K562 (cell line): ENCODE measurements at regions of chr1 and their contacts with region 1.

Region 1: DNA sequence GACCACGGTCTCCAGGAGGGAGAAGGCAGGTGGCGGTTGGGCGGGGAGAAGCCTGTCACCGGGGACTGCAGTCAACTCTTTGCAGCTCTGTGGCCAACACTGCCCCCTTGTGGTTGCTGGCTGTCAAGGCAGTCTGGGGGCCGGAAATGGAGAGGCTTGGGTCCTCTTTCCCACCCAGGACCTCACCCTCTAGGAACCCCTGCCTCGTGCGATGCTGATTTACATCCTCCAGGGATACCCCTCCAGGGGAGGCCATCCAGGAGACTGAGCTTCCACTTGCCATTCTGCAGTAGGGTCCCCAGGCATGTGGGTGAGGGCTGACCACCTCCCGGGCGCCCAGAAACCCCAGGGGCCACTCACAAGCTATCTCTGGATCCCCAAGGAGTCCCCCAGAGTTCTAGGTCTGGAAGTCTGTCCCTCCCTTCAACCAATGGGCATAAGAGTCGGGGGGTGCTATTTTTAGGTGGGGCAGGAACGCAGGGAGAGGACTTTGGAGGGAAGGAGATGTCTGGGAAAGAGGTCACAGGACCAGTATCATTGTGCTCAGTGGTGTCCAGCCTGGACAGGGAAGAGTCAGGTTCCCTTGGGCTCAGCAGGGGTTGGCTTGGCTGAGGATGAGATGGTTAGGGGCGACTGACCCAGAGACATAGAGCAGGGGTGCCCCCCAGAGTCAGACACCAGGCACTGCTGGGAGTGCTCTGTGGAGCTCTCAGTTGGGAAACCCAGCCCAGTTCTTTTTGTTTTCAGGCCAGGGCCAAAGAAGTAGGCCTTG is 7.1 kb upstream of the GPR61 start:
- DNase-seq: peak; percentile 88 to 91 (median 90)
- ATAC-seq: peak; percentile 92
- H3K4me3 ChIP-seq: no peak overlapping the region
- H3K27ac ChIP-seq: peak overlapping the region; percentile 63; the same call in 2 of the 3 replicates
- H3K4me1 ChIP-seq: peaks cover 9 to 14% of the 10 kb centered on the region in 2 experiments; a peak in 4 of 5 replicates
- H3K27me3 ChIP-seq: peaks cover 5 to 14% of the 10 kb centered on the region in 2 experiments
- CTCF ChIP-seq: peak; percentile 97 to 99 (median 97)
- EP300 ChIP-seq: no peak
- POLR2A ChIP-seq: no peak
- RAD21 ChIP-seq: peak; percentile 92 to 98

Region 2: DNA sequence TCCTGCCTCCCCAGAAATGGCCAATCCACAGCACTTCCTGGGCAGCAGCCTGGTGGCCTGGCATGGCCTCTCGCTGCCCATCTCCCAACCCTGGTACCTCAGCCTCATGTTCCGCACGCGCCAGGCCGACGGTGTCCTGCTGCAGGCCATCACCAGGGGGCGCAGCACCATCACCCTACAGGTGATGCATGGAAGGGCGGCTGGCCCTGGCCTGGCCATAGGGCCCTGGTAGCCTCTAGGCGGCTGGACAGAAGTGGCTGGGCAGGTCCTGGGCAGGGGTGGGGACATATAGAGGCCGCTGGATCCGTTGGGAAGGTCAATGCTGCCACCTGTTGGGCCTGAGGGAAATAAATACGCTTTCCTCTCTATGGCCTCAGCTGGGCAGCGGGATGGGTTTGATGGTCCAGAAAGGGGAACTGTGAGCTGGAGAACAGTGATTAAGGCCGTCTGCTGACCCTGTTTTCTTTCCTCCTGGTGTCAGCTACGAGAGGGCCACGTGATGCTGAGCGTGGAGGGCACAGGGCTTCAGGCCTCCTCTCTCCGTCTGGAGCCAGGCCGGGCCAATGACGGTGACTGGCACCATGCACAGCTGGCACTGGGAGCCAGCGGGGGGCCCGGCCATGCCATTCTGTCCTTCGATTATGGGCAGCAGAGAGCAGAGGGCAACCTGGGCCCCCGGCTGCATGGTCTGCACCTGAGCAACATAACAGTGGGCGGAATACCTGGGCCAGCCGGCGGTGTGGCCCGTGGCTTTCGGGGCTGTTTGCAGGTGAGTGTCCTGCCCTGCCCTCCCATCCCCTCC is 268.8 kb before region 1 on chr1:
- CTCF ChIA-PET with region 1: interaction called, 32 read pairs
- POLR2A ChIA-PET with region 1: no interaction called
- in situ Hi-C with region 1: loop called (anchors 5 kb)
- intact Hi-C with region 1: loop called (anchors 1 kb)
- DNase-seq: peak; percentile 91 to 96 (median 93)
- ATAC-seq: peak; percentile 99
- H3K4me3 ChIP-seq: no peak overlapping the region
- H3K27ac ChIP-seq: no peak overlapping the region
- H3K4me1 ChIP-seq: peaks cover 0 to 31% of the 10 kb centered on the region in 2 experiments; a peak in 2 of 5 replicates
- H3K27me3 ChIP-seq: no peaks in the 10 kb centered on the region
- CTCF ChIP-seq: peak; percentile 99 to 100 (median 100)
- EP300 ChIP-seq: peak; percentile 16; the same call in 1 of the 2 replicates
- POLR2A ChIP-seq: no peak
- RAD21 ChIP-seq: peak; percentile 98 to 100

Region 3: GRCh38 chr1:109397538-109398342 is 134.8 kb before region 1 on chr1 and contains the start of gene SORT1:
- CTCF ChIA-PET with region 1: interaction called, 3 read pairs
- POLR2A ChIA-PET with region 1: no interaction called
- in situ Hi-C with region 1: no loop called
- intact Hi-C with region 1: loop called (anchors 1 kb)
- DNase-seq: peak; percentile 93 to 96 (median 94)
- ATAC-seq: peak; percentile 88
- H3K4me3 ChIP-seq: peak within 1 kb of the TSS; percentile 55
- H3K27ac ChIP-seq: peak within 1 kb of the TSS; percentile 51
- H3K4me1 ChIP-seq: peaks cover 29 to 34% of the 10 kb centered on the region in 2 experiments
- H3K27me3 ChIP-seq: no peaks in the 10 kb centered on the region
- CTCF ChIP-seq: peak in 2 of 3 experiments; percentile 37 to 60; a peak in 4 of 6 replicates
- EP300 ChIP-seq: no peak
- POLR2A ChIP-seq: no peak
- RAD21 ChIP-seq: peak; percentile 56 to 81
- polyA plus RNA-seq, gene SORT1: 27.4 to 33.3 TPM

Region 4: GRCh38 chr1:109483672-109484518 is 48.7 kb before region 1 on chr1 and contains the start of gene ATXN7L2:
- CTCF ChIA-PET with region 1: interaction called, 4 read pairs
- POLR2A ChIA-PET with region 1: interaction called, 21 read pairs
- in situ Hi-C with region 1: no loop called
- intact Hi-C with region 1: no loop called
- DNase-seq: peak; percentile 97 to 100 (median 99)
- ATAC-seq: peak; percentile 85
- H3K4me3 ChIP-seq: peak within 1 kb of the TSS; percentile 76
- H3K27ac ChIP-seq: peak within 1 kb of the TSS; percentile 93
- H3K4me1 ChIP-seq: peaks cover 12 to 23% of the 10 kb centered on the region in 2 experiments; a peak in 4 of 5 replicates
- H3K27me3 ChIP-seq: peaks cover 18 to 28% of the 10 kb centered on the region in 2 experiments; a peak in 4 of 5 replicates
- CTCF ChIP-seq: no peak
- EP300 ChIP-seq: no peak; the same call in 1 of the 2 replicates
- POLR2A ChIP-seq: peak; percentile 90
- RAD21 ChIP-seq: peak; percentile 17 to 19; a peak in 1 of 4 replicates
- polyA plus RNA-seq, gene ATXN7L2: 0.21 to 0.56 TPM

Region 5: GRCh38 chr1:109499661-109500536 is 32.7 kb before region 1 on chr1:
- CTCF ChIA-PET with region 1: interaction called, 131 read pairs
- POLR2A ChIA-PET with region 1: interaction called, 17 read pairs
- in situ Hi-C with region 1: loop called (anchors 5 kb)
- intact Hi-C with region 1: loop called (anchors 1 kb)
- DNase-seq: peak; percentile 54 to 81 (median 66)
- ATAC-seq: peak; percentile 79
- H3K4me3 ChIP-seq: no peak overlapping the region
- H3K27ac ChIP-seq: no peak overlapping the region
- H3K4me1 ChIP-seq: peaks cover 16 to 35% of the 10 kb centered on the region in 2 experiments
- H3K27me3 ChIP-seq: no peaks in the 10 kb centered on the region
- CTCF ChIP-seq: peak; percentile 72 to 86 (median 75)
- EP300 ChIP-seq: no peak
- POLR2A ChIP-seq: no peak
- RAD21 ChIP-seq: peak; percentile 48 to 59

Region 6: DNA sequence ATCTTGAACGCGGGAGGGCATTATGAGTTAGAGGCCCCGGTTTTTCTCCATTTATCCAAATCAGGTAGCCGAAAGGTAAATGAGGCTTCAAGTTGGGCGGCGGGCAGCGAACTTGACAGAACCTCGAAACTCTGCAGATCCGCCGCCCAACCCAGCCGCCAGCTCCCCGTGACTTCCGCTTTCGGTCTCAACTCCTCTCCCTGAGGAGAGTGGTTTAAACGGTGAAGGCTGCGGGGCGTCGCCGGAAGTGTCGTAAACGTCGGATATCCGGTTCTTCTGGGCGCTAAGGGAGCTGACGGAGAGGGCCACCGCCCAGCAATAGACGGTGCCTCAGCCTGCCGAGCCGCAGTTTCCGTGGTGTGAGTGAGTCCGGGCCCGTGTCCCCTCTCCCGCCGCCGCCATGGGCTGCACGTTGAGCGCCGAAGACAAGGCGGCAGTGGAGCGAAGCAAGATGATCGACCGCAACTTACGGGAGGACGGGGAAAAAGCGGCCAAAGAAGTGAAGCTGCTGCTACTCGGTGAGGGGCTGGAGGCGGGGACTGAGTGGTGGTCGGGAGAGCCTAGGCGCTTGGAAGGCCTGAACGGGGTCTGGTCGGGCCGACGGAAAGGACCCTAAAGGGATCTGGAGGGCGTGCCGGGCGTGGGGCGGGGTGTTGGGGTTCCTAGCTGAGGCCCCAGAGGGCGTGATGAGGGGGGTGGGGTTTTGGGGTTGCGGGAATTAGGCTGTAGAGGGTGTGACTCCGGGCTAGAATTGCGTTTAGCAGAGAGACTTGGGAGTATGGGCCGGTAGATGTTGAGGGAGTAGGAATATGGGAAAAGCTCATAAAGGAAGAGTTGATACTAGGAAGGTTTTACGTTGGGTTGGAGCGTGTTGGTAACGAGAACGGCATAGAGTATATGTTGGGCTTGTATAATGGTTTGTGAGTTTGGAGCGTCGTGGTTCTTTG is 16.0 kb after region 1 on chr1 and contains the start of gene GNAI3:
- CTCF ChIA-PET with region 1: interaction called, 4 read pairs
- POLR2A ChIA-PET with region 1: interaction called, 13 read pairs
- in situ Hi-C with region 1: no loop called
- intact Hi-C with region 1: no loop called
- DNase-seq: peak; percentile 92 to 99 (median 94)
- ATAC-seq: peak; percentile 96
- H3K4me3 ChIP-seq: peak within 1 kb of the TSS; percentile 94
- H3K27ac ChIP-seq: peak within 1 kb of the TSS; percentile 91
- H3K4me1 ChIP-seq: peaks cover 4 to 5% of the 10 kb centered on the region in 2 experiments
- H3K27me3 ChIP-seq: no peaks in the 10 kb centered on the region
- CTCF ChIP-seq: no peak; a peak in 1 of 6 replicates
- EP300 ChIP-seq: no peak
- POLR2A ChIP-seq: peak; percentile 98
- RAD21 ChIP-seq: no peak; a peak in 2 of 4 replicates
- polyA plus RNA-seq, gene GNAI3: 6.9 to 8.0 TPM